GM23248 (cell line): ENCODE measurements at regions of chr15 and their contacts with region 1.

Region 1: DNA sequence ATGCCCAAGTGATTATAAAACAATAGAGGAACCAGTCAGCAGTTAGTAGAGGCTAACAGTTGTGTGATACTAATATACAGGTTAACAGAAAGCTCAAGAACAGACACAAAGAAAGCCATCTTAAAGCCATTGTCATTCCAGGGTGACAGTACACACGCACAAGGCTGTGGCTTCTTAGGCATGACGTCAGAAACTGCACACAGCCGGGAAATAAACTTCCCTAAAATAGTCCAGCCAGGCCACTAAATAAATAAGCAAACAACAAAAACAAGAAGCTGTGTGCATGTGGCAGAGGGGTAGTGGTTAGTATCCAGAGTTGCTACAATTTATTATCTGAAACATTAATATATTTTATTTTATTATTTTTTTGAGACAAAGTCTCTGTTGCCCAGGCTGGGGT is 49.8 kb downstream of the PPCDC start:
- DNase-seq: no peak
- H3K4me3 ChIP-seq: no peak overlapping the region
- H3K27ac ChIP-seq: no peak overlapping the region
- H3K4me1 ChIP-seq: no peaks in the 10 kb centered on the region
- H3K27me3 ChIP-seq: no peaks in the 10 kb centered on the region

Region 2: GRCh38 chr15:75130597-75131268 is 57.5 kb after region 1 on chr15:
- in situ Hi-C with region 1: loop called (anchors 10 kb)
- DNase-seq: no peak
- H3K4me3 ChIP-seq: no peak overlapping the region
- H3K27ac ChIP-seq: no peak overlapping the region
- H3K4me1 ChIP-seq: no peaks in the 10 kb centered on the region
- H3K27me3 ChIP-seq: no peaks in the 10 kb centered on the region